Naive thymus-derived CD4-positive, alpha-beta T cell (primary cell): ENCODE measurements at regions of chr11 and their contacts with region 1.

Region 1: GRCh38 chr11:6377902-6378639 is 12.2 kb upstream of the SMPD1 start:
- DNase-seq: peak in 5 of 9 donors; percentile 20 to 52 (median 45)
- ATAC-seq: peak; percentile 79
- H3K4me3 ChIP-seq: peak overlapping the region; percentile 17
- H3K4me3 Mint-ChIP-seq: peak overlapping the region; percentile 48 to 85 (median 72)
- H3K27ac ChIP-seq: peak overlapping the region; percentile 44
- H3K27ac Mint-ChIP-seq: peak overlapping the region; percentile 69 to 93 (median 85)
- H3K4me1 ChIP-seq: peaks cover 0 to 23% of the 10 kb centered on the region in 2 donors
- H3K4me1 Mint-ChIP-seq: peaks cover 14 to 44% (median 37%) of the 10 kb centered on the region in 7 donors
- H3K27me3 ChIP-seq: no peaks in the 10 kb centered on the region
- H3K27me3 Mint-ChIP-seq: no peaks in the 10 kb centered on the region

Region 2: DNA sequence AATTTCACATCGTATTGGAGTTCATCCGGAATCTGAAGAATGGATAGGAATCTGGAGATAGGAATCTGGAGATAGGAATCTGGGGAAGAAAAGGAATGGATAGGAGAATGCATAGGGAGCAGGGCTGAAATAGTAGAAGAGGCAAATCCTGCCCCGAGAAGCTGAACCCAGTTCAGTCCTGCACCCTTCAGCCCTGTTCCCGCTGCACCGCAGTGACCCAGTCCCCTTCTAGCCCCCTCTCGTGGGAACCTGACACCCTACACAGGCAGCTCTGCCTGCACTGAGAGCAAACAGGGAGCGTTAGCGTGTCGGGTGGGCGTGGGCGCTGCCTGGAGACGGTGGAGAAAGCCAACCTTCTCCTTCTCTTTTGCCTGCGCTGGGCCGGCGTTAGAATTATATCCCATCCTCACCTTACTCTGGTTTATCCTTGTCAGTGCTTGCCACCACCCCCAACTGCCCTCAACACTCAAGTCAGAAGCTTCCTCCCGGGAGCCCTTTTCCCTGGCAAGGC is 119.4 kb before region 1 on chr11:
- CTCF ChIA-PET with region 1: no interaction called
- POLR2A ChIA-PET with region 1: no interaction called
- intact Hi-C with region 1: no loop called
- DNase-seq: no peak
- ATAC-seq: peak; percentile 44
- H3K4me3 ChIP-seq: peak overlapping the region; percentile 57
- H3K4me3 Mint-ChIP-seq: peak overlapping the region in 6 of 10 donors; percentile 64 to 86 (median 82)
- H3K27ac ChIP-seq: no peak overlapping the region
- H3K27ac Mint-ChIP-seq: no peak overlapping the region
- H3K4me1 ChIP-seq: peaks cover 0 to 13% of the 10 kb centered on the region in 2 donors
- H3K4me1 Mint-ChIP-seq: peaks cover 0 to 10% (median 0%) of the 10 kb centered on the region in 7 donors
- H3K27me3 ChIP-seq: peaks cover 8 to 15% of the 10 kb centered on the region in 2 donors
- H3K27me3 Mint-ChIP-seq: peaks cover 0 to 17% (median 8%) of the 10 kb centered on the region in 5 donors

Region 3: DNA sequence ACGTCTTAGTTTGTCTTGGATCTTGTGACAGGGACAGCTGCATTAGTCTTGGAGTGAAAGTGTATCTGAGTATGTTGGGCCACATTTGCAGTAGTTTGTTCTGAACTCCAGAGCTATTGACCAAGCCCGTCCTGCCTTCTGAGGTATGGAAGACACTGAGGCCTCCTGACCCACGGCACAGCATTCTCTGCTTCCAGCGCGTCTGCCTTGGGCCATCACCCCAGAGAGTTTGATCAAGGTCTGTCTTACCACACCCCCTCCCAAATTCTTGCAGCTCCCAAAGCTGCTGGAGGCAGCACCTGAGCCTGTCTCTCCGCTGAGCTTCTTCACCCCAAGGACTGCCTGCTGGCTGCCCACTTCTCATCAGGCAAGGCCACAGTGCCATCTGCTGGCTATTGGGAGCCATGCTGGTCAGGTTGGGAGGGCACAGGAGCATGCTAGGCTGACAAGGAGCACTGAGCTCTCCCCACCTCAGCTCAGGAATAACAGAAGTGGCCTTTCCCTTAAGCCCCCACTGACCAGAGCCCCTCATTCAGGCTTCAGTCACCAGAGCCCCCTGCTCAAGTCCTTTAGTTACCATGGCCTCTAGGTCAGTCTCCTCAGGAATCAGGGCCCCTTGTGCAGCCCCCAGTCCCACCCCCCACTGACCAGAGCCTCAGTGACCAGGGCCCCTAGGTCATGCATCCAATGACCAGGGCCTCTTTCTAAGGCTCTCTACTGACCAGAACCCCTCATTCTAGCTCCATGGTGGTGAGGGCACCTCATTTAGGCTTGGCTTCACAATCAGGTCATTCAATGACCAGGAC is 15.0 kb before region 1 on chr11:
- CTCF ChIA-PET with region 1: interaction called, 39 read pairs
- POLR2A ChIA-PET with region 1: no interaction called
- intact Hi-C with region 1: no loop called
- DNase-seq: peak; percentile 34 to 67 (median 61)
- ATAC-seq: peak; percentile 92
- H3K4me3 ChIP-seq: no peak overlapping the region
- H3K4me3 Mint-ChIP-seq: no peak overlapping the region
- H3K27ac ChIP-seq: no peak overlapping the region
- H3K27ac Mint-ChIP-seq: no peak overlapping the region
- H3K4me1 ChIP-seq: no peaks in the 10 kb centered on the region
- H3K4me1 Mint-ChIP-seq: peaks cover 0 to 1% (median 0%) of the 10 kb centered on the region in 7 donors
- H3K27me3 ChIP-seq: no peaks in the 10 kb centered on the region
- H3K27me3 Mint-ChIP-seq: no peaks in the 10 kb centered on the region

Region 4: GRCh38 chr11:6413791-6414201 is 35.7 kb after region 1 on chr11:
- CTCF ChIA-PET with region 1: interaction called, 30 read pairs
- POLR2A ChIA-PET with region 1: interaction called, 37 read pairs
- intact Hi-C with region 1: loop called (anchors 1 to 2 kb)
- DNase-seq: peak in 7 of 9 donors; percentile 78 to 91 (median 88)
- ATAC-seq: peak; percentile 90
- H3K4me3 ChIP-seq: peak overlapping the region; percentile 28
- H3K4me3 Mint-ChIP-seq: no peak overlapping the region
- H3K27ac ChIP-seq: peak overlapping the region; percentile 74
- H3K27ac Mint-ChIP-seq: no peak overlapping the region
- H3K4me1 ChIP-seq: peaks cover 31 to 81% of the 10 kb centered on the region in 2 donors
- H3K4me1 Mint-ChIP-seq: peaks cover 0 to 36% (median 17%) of the 10 kb centered on the region in 7 donors
- H3K27me3 ChIP-seq: no peaks in the 10 kb centered on the region
- H3K27me3 Mint-ChIP-seq: no peaks in the 10 kb centered on the region

Region 5: DNA sequence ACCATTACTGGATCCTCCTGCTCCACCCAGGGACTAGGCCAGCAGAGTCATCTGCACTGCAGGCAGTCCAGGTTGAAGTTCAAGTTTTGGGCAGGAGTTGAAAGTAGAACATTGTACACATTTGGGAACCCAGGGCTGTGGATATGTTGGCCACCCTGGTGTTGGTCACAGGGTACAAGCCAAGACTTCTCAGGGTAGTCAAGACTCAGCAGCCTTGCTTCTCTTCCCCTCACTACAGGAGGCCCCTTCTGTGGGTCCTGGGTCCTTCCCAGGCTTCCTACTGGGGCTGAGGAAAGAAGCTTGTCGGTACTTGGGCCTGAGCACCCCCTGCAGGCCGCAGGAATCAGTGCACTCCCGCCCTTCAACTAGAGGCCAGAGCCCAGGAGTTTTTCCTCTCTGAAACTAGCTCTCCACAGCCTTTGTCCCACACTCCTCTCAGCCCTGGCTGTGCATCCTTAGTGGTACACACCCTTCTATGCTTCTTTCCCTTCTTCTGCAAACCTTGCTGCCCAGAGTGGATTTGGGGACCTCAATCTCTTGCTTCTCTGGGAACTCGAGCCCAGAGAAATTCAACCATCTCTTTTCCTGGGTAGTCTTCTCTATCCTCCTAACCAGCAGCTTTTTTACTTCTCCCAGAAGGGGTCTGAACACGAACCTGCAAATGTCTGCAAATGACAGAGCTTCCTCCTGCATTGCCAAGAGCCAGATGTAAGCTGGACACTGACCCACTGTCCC is 65.4 kb after region 1 on chr11:
- CTCF ChIA-PET with region 1: interaction called, 573 read pairs
- POLR2A ChIA-PET with region 1: interaction called, 73 read pairs
- intact Hi-C with region 1: loop called (anchors 1 kb)
- DNase-seq: peak; percentile 28 to 67 (median 53)
- ATAC-seq: peak; percentile 87
- H3K4me3 ChIP-seq: no peak overlapping the region
- H3K4me3 Mint-ChIP-seq: no peak overlapping the region
- H3K27ac ChIP-seq: no peak overlapping the region
- H3K27ac Mint-ChIP-seq: no peak overlapping the region
- H3K4me1 ChIP-seq: peaks cover 12 to 19% of the 10 kb centered on the region in 2 donors
- H3K4me1 Mint-ChIP-seq: peaks cover 0 to 5% (median 0%) of the 10 kb centered on the region in 7 donors
- H3K27me3 ChIP-seq: no peaks in the 10 kb centered on the region
- H3K27me3 Mint-ChIP-seq: peaks cover 0 to 12% (median 0%) of the 10 kb centered on the region in 5 donors

Region 6: DNA sequence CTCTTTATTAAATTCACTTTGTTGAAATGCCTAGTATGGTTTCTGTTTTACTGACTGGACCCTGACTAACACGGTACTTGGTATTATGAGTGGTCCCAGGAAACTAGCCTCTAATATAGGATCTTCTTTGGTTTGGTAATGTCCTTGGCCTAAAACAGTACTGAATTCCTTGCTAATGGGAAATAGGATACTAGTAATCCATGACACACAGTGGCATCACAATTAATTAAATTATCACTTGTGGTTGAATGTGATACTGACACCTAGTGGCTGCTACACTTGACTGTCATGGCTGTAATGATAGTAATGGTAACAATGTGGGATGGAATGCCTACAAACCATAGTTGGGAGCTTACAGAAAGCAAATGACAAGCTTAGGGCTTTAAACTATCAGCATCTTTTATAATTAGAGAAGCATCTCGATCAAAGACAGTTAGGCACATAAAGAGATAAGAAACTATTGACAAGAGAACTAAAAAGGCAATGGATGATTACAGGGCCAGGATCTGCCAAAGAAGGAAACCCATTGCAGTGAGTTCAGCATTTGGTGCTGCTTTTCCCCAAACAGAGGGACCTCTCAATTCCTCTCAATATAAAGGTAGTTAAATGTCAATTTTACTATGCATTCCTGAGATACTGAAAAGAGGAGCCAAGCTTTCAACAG is 127.6 kb after region 1 on chr11:
- CTCF ChIA-PET with region 1: interaction called, 66 read pairs
- POLR2A ChIA-PET with region 1: interaction called, 13 read pairs
- intact Hi-C with region 1: loop called (anchors 1 kb)
- DNase-seq: peak in 5 of 9 donors; percentile 20 to 45 (median 31)
- ATAC-seq: peak; percentile 83
- H3K4me3 ChIP-seq: no peak overlapping the region
- H3K4me3 Mint-ChIP-seq: no peak overlapping the region
- H3K27ac ChIP-seq: no peak overlapping the region
- H3K27ac Mint-ChIP-seq: peak overlapping the region in 1 of 9 donors; percentile 8
- H3K4me1 ChIP-seq: no peaks in the 10 kb centered on the region
- H3K4me1 Mint-ChIP-seq: peaks cover 4 to 12% (median 6%) of the 10 kb centered on the region in 7 donors
- H3K27me3 ChIP-seq: no peaks in the 10 kb centered on the region
- H3K27me3 Mint-ChIP-seq: no peaks in the 10 kb centered on the region

Region 7: GRCh38 chr11:6682936-6683861 is 305.1 kb after region 1 on chr11 and contains the start of gene MRPL17:
- CTCF ChIA-PET with region 1: interaction called, 5 read pairs
- POLR2A ChIA-PET with region 1: interaction called, 3 read pairs
- intact Hi-C with region 1: loop called (anchors 1 kb)
- DNase-seq: peak; percentile 95 to 100 (median 99)
- ATAC-seq: peak; percentile 99
- H3K4me3 ChIP-seq: peak within 1 kb of the TSS; percentile 75
- H3K4me3 Mint-ChIP-seq: peak within 1 kb of the TSS; percentile 83 to 99 (median 98)
- H3K27ac ChIP-seq: peak within 1 kb of the TSS; percentile 85
- H3K27ac Mint-ChIP-seq: peak within 1 kb of the TSS; percentile 94 to 99 (median 99)
- H3K4me1 ChIP-seq: peaks cover 7 to 10% of the 10 kb centered on the region in 2 donors
- H3K4me1 Mint-ChIP-seq: peaks cover 18 to 58% (median 44%) of the 10 kb centered on the region in 7 donors
- H3K27me3 ChIP-seq: no peaks in the 10 kb centered on the region
- H3K27me3 Mint-ChIP-seq: peaks cover 0 to 3% (median 0%) of the 10 kb centered on the region in 5 donors
- total RNA-seq, gene MRPL17: 10.0 to 70.3 (median 26.4) TPM

Region 8: DNA sequence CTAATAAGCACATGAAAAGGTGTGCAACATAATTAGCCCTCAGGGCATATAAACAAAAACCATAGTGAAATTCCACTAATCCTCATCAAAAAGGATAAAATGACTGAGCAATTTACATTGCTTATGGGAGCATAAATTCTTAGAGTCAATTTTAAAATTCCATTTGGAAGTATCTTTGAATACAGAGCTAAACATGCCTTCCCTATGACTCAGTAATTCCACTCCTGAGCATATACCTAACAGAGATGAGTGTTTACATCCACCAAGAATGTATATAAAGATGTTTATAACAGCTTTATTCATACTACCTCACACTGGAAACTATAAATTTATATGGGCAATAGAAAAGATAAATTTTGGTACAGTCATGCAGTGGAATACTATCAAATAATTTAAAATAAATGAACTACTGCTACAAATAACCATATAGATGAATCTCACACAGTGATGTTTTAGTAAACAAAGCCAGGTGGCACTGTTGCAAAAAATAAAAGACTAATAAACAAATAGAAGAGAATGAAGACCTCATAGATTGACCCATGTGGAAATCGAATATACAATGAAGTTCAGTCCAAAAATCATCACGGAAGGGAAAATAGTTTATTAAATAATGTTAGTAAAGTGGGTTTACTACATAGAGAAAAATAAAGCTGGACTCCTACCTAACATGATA is 522.4 kb after region 1 on chr11:
- CTCF ChIA-PET with region 1: no interaction called
- POLR2A ChIA-PET with region 1: no interaction called
- intact Hi-C with region 1: no loop called
- DNase-seq: no peak
- ATAC-seq: no peak
- H3K4me3 ChIP-seq: no peak overlapping the region
- H3K4me3 Mint-ChIP-seq: no peak overlapping the region
- H3K27ac ChIP-seq: no peak overlapping the region
- H3K27ac Mint-ChIP-seq: no peak overlapping the region
- H3K4me1 ChIP-seq: no peaks in the 10 kb centered on the region
- H3K4me1 Mint-ChIP-seq: no peaks in the 10 kb centered on the region
- H3K27me3 ChIP-seq: no peaks in the 10 kb centered on the region
- H3K27me3 Mint-ChIP-seq: peaks cover 10 to 52% (median 44%) of the 10 kb centered on the region in 5 donors